AG04450 (cell line): ENCODE measurements at regions of chr10 and their contacts with region 1.

Region 1: GRCh38 chr10:94320285-94320914 is 42.3 kb downstream of the NOC3L start:
- DNase-seq: no peak
- H3K4me3 ChIP-seq: no peak overlapping the region
- H3K27ac ChIP-seq: no peak overlapping the region
- H3K27me3 ChIP-seq: no peaks in the 10 kb centered on the region
- CTCF ChIP-seq: peak; percentile 79

Region 2: GRCh38 chr10:93816123-93816747 is 504.2 kb before region 1 on chr10:
- CTCF ChIA-PET with region 1: interaction called, 13 read pairs
- POLR2A ChIA-PET with region 1: no interaction called
- DNase-seq: peak; percentile 7
- H3K4me3 ChIP-seq: peak overlapping the region; percentile 4; the same call in 1 of the 2 replicates
- H3K27ac ChIP-seq: no peak overlapping the region
- H3K27me3 ChIP-seq: peaks cover 17% of the 10 kb centered on the region
- CTCF ChIP-seq: peak; percentile 78

Region 3: GRCh38 chr10:93916257-93917063 is 403.9 kb before region 1 on chr10:
- CTCF ChIA-PET with region 1: interaction called, 215 read pairs
- POLR2A ChIA-PET with region 1: no interaction called
- DNase-seq: peak; percentile 8
- H3K4me3 ChIP-seq: no peak overlapping the region
- H3K27ac ChIP-seq: no peak overlapping the region
- H3K27me3 ChIP-seq: no peaks in the 10 kb centered on the region
- CTCF ChIP-seq: peak; percentile 68

Region 4: DNA sequence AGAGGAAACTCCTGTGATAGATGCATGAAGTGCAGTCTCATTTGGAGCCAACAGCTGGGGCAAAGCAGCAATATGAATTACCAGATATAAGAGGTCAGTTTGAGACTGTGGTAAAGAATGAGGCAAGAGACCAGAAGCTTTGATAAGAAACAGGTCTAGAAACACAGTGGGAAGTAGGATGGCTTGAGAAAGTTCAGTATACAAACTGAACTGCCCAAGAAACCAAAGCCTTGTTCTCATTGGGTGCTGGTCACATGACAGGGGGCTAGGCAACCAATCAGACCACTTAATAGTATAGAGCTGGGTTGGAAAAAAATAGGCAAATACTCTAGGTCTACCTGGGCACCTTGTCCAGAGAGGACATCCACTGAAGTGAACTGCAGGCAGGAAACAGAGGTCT is 372.9 kb before region 1 on chr10:
- CTCF ChIA-PET with region 1: interaction called, 11 read pairs
- POLR2A ChIA-PET with region 1: no interaction called
- DNase-seq: no peak
- H3K4me3 ChIP-seq: no peak overlapping the region
- H3K27ac ChIP-seq: peak overlapping the region; percentile 23
- H3K27me3 ChIP-seq: no peaks in the 10 kb centered on the region
- CTCF ChIP-seq: no peak

Region 5: DNA sequence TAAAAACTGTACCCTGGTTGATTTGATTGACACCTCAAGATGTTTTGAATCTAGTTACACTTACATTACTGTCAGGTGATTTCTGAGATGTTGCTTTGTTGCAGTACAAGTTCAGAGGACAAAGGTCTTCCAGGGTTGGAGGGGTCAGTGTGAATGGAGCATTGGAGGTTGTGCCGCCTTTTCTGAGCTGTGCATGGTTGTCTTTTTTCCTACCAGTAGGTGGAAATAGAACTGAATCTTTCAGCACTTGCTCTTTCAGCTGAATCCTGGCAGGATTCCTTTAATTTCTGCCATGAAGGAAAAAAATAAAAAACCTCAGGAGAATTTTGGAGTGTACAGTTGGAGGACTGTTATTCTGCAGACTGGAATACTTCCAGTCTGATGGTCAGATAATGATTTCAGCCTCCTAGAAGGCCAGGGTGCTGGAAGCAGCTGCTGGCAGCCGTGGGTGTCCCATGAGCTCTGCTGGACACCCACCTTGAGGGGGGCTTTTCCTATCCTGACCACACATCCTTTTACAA is 244.0 kb before region 1 on chr10:
- CTCF ChIA-PET with region 1: interaction called, 93 read pairs
- POLR2A ChIA-PET with region 1: no interaction called
- DNase-seq: peak; percentile 30
- H3K4me3 ChIP-seq: no peak overlapping the region
- H3K27ac ChIP-seq: no peak overlapping the region
- H3K27me3 ChIP-seq: no peaks in the 10 kb centered on the region
- CTCF ChIP-seq: peak; percentile 76

Region 6: GRCh38 chr10:94287336-94287735 is 33.1 kb before region 1 on chr10:
- CTCF ChIA-PET with region 1: interaction called, 13 read pairs
- POLR2A ChIA-PET with region 1: no interaction called
- DNase-seq: no peak
- H3K4me3 ChIP-seq: no peak overlapping the region
- H3K27ac ChIP-seq: no peak overlapping the region
- H3K27me3 ChIP-seq: no peaks in the 10 kb centered on the region
- CTCF ChIP-seq: no peak

Region 7: DNA sequence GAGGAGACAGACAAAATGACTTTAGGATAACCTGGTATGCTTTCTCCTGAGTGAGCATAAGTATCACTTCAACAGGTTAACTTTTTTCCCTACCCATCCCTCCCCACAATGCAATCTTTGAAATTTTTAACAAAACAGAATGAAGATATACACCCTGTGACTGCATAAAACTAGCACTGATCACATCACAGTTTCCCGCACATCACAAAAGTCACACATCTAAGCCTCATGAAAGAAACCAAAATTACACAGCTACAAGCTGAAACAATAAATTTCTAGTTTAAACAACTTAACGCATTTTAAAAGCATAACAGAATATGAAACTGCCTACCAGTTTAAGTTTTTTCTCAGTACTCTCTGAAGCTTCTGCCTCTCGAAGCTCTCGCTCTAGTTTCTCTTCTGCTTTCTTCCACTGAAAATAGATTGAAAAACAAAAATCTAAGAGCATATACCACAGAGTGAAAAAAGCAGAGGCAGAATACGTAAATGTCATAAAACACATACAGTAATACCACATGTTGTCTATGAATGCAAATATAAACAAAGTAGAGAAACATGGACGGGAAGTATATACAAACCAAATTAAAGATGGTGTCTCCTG is 24.2 kb after region 1 on chr10:
- CTCF ChIA-PET with region 1: interaction called, 11 read pairs
- POLR2A ChIA-PET with region 1: no interaction called
- DNase-seq: no peak
- H3K4me3 ChIP-seq: no peak overlapping the region
- H3K27ac ChIP-seq: no peak overlapping the region
- H3K27me3 ChIP-seq: no peaks in the 10 kb centered on the region
- CTCF ChIP-seq: no peak